A673 (cell line): ENCODE measurements at regions of chr11 and their contacts with region 1.

Region 1: DNA sequence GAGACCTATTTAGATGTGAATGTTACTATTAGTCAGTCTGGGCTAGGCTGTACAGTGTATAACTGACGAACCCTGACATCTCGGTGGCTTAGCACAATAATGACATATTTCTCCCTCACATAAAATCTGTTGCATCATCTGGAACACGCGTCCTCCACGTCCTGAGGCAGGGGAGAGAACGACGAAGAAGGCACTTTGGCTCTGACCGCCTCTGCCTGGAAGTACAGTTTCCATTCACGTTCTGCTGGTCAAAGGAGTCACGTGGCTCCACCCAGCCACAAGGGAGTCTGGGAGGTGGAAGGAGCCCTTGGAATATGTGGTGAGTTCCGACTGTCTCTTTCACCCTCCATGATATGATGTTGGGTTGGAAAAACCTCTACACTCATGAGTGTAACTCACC is 55.1 kb upstream of the CD82 start:
- DNase-seq: no peak
- H3K4me3 ChIP-seq: no peak overlapping the region
- H3K27ac ChIP-seq: no peak overlapping the region
- H3K4me1 ChIP-seq: peaks cover 6% of the 10 kb centered on the region
- H3K27me3 ChIP-seq: no peaks in the 10 kb centered on the region
- CTCF ChIP-seq: no peak

Region 2: GRCh38 chr11:44120169-44120568 is 390.2 kb before region 1 on chr11:
- CTCF ChIA-PET with region 1: no interaction called
- POLR2A ChIA-PET with region 1: interaction called, 11 read pairs
- intact Hi-C with region 1: no loop called
- DNase-seq: no peak
- H3K4me3 ChIP-seq: no peak overlapping the region
- H3K27ac ChIP-seq: no peak overlapping the region
- H3K4me1 ChIP-seq: peaks cover 6% of the 10 kb centered on the region
- H3K27me3 ChIP-seq: no peaks in the 10 kb centered on the region
- CTCF ChIP-seq: peak; percentile 65

Region 3: DNA sequence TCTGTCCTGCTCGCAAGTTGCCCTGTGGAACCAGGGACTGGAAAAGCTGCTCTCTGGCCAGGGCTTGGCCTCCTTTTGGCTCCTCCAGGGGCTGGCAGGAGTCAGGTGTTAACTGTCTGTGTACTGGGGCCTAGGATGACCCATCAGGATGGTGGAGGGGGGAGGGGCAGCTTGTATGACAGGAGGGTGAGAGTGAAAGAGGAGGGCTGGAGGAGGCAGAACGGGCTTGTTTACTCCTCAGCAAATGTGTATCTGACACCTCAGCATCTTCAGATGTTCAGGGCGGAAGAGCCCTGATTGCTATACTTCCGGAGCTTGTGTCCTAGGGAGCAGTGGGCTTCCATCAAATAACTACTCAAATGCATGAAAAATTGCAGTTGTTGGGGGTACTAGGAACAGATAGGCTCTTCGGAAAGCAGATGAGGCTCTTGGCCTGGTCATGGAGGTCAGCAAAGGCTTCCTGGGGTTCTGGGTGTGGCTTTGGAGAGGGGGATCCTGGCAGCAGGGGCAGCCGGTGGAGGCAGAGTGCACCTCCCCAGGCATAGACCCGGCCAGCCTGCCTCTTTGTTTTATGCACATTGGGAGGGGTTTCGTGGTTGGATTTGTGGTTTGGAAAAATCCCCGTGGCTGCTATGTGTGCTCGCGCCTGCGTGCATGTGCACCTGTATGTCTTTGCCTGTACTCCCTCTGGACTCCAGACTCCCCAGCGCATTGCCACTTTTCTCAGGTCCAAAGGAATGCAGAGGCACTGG is 86.3 kb after region 1 on chr11:
- CTCF ChIA-PET with region 1: no interaction called
- POLR2A ChIA-PET with region 1: no interaction called
- intact Hi-C with region 1: no loop called
- DNase-seq: no peak
- H3K4me3 ChIP-seq: no peak overlapping the region
- H3K27ac ChIP-seq: no peak overlapping the region
- H3K4me1 ChIP-seq: peaks cover 15% of the 10 kb centered on the region
- H3K27me3 ChIP-seq: no peaks in the 10 kb centered on the region
- CTCF ChIP-seq: no peak

Region 4: DNA sequence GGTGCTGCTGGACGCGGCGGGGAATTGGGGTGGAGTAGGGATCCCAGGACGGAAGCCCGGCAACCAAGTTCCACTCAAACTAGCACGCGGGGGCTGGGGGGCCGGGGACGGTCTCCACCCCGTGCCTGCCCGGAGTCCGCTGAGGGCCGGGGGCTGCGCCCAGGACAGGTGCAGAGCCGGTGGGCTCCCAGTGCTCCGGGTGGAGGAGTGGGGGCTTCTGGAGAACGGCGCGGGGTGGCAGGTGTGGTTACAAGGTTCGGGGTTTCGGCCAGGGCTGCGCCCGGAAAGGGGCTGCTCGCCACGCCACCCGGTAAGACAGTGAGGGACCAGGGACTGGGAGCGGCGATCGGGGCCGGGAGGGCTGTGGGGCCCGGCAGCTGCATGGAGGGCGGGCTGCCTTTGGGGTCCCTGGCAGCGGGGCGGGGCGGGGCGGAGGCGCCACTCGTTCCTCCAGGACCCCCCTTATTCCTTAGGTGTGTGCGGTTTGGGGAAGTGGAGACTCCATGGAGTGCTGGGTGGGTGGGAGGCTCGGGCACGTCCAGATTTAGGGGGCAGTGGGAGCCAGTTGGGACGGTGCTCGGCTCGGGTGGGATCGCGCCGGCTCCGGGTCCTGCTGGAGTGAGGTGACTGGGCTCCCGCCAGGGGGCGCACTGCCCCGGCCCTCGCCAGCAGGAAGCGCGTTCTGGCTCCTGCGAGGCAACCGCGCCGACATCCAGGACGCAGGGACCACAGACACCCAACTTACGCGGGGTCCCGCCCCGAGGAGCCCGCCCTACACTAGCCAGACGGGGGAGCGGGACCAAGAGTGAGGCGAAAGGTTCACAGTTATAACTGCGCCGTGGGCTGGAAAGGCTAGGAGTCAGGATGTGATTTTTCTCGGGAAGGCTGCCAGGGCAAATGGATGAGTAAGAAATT is 217.3 kb after region 1 on chr11:
- CTCF ChIA-PET with region 1: no interaction called
- POLR2A ChIA-PET with region 1: no interaction called
- intact Hi-C with region 1: no loop called
- DNase-seq: peak; percentile 93
- H3K4me3 ChIP-seq: peak overlapping the region; percentile 77
- H3K27ac ChIP-seq: peak overlapping the region; percentile 44
- H3K4me1 ChIP-seq: peaks cover 37% of the 10 kb centered on the region
- H3K27me3 ChIP-seq: no peaks in the 10 kb centered on the region
- CTCF ChIP-seq: peak; percentile 100